ENCODE measurements at regions of chr12 and their contacts with region 1.

Region 1: GRCh38 chr12:124321040-124321481 is 26.2 kb downstream of the RFLNA start:
- DNase-seq: peak; percentile 24
- ATAC-seq: peak; percentile 93
- H3K4me3 ChIP-seq: no peak overlapping the region
- H3K27ac ChIP-seq: no peak overlapping the region
- H3K4me1 ChIP-seq: no peaks in the 10 kb centered on the region
- H3K27me3 ChIP-seq: no peaks in the 10 kb centered on the region
- CTCF ChIP-seq: peak; percentile 91 to 97 (median 93); a peak in 5 of 6 replicates
- EP300 ChIP-seq: no peak
- POLR2A ChIP-seq: 0 out of 2 replicates have a peak, but pooled peaks have one; percentile 42
- RAD21 ChIP-seq: peak; percentile 88

Region 2: DNA sequence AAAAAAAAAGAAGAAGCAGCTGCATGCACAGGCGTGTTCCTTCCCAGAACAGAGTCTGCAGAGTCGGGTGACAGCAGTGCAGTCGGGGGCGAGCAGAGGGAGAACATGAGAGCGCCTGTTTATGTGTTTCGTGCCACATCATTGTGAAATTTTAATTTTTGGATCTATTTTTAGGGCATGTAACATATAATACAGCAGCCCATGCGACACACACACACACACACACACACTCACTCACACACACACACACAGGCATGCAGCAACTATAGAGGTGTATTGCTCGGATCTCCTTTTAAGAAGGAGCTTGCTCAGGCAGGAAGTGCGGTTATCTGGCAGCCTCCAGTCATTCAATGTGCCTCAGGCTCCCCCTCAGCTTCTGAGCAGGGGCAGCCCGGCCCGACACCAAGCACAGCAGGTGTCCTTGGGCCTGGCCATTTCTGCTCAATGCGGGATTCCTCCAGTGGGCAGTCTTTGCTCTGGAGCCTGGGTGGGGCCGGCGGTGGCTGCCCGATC is 276.2 kb before region 1 on chr12:
- CTCF ChIA-PET with region 1: interaction called, 39 read pairs
- POLR2A ChIA-PET with region 1: no interaction called
- RAD21 ChIA-PET with region 1: no interaction called
- SMC1A ChIA-PET with region 1: no interaction called
- in situ Hi-C with region 1: loop called (anchors 5 kb)
- intact Hi-C with region 1: loop called (anchors 5 kb)
- DNase-seq: no peak
- ATAC-seq: no peak
- H3K4me3 ChIP-seq: no peak overlapping the region
- H3K27ac ChIP-seq: no peak overlapping the region
- H3K4me1 ChIP-seq: no peaks in the 10 kb centered on the region
- H3K27me3 ChIP-seq: no peaks in the 10 kb centered on the region
- CTCF ChIP-seq: no peak
- EP300 ChIP-seq: no peak
- POLR2A ChIP-seq: no peak
- RAD21 ChIP-seq: no peak

Region 3: DNA sequence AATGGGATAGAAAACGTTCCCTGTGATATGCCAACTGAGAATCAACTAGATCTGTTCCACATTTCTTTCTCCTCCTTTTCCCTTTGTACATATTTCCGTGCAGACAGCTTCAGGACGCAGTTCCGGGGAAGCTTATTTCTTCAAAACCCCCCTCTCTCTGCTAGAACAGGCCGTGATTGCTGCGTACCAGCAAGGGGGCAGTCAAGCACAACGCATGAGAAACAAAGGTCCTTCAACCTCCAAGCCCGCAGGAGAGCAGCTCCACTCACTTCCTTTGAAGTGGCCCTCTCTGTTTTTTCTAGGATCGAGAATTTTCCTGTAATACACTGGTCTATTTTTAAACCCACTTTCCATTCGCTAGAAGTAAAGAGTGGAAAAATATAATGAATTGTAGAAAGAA is 267.2 kb before region 1 on chr12:
- CTCF ChIA-PET with region 1: no interaction called
- POLR2A ChIA-PET with region 1: no interaction called
- RAD21 ChIA-PET with region 1: interaction called, 4 read pairs
- SMC1A ChIA-PET with region 1: no interaction called
- in situ Hi-C with region 1: no loop called
- intact Hi-C with region 1: loop called (anchors 5 kb)
- DNase-seq: no peak
- ATAC-seq: peak; percentile 65; the same call in 2 of the 3 replicates
- H3K4me3 ChIP-seq: no peak overlapping the region
- H3K27ac ChIP-seq: no peak overlapping the region
- H3K4me1 ChIP-seq: no peaks in the 10 kb centered on the region
- H3K27me3 ChIP-seq: no peaks in the 10 kb centered on the region
- CTCF ChIP-seq: peak; percentile 22 to 60 (median 43); a peak in 5 of 6 replicates
- EP300 ChIP-seq: no peak
- POLR2A ChIP-seq: no peak
- RAD21 ChIP-seq: peak; percentile 66

Measured in GM12878 (cell line).